CD4-positive, alpha-beta T cell (primary cell): ENCODE measurements at regions of chr22 and their contacts with region 1.

Region 1: GRCh38 chr22:46006379-46007002 is 29.5 kb upstream of the WNT7B start:
- DNase-seq: peak; percentile 79 to 94 (median 89)
- ATAC-seq: peak; percentile 94
- H3K4me3 ChIP-seq: no peak overlapping the region
- H3K4me3 Mint-ChIP-seq: no peak overlapping the region
- H3K27ac ChIP-seq: no peak overlapping the region
- H3K27ac Mint-ChIP-seq: no peak overlapping the region
- H3K4me1 ChIP-seq: peaks cover 16% of the 10 kb centered on the region
- H3K4me1 Mint-ChIP-seq: peaks cover 4% of the 10 kb centered on the region
- H3K27me3 ChIP-seq: peaks cover 0 to 4% of the 10 kb centered on the region in 2 experiments
- H3K27me3 Mint-ChIP-seq: peaks cover 4% of the 10 kb centered on the region
- CTCF ChIP-seq: peak; percentile 95

Region 2: GRCh38 chr22:46057762-46058420 is 51.4 kb after region 1 on chr22:
- CTCF ChIA-PET with region 1: interaction called, 12 read pairs
- POLR2A ChIA-PET with region 1: interaction called, 3 read pairs
- intact Hi-C with region 1: no loop called
- DNase-seq: peak in 6 of 14 experiments; percentile 17 to 80 (median 54)
- ATAC-seq: peak; percentile 69
- H3K4me3 ChIP-seq: no peak overlapping the region
- H3K4me3 Mint-ChIP-seq: peak overlapping the region; percentile 82
- H3K27ac ChIP-seq: peak overlapping the region in 1 of 2 donors; percentile 24
- H3K27ac Mint-ChIP-seq: peak overlapping the region; percentile 92
- H3K4me1 ChIP-seq: peaks cover 52% of the 10 kb centered on the region
- H3K4me1 Mint-ChIP-seq: peaks cover 42% of the 10 kb centered on the region
- H3K27me3 ChIP-seq: no peaks in the 10 kb centered on the region
- H3K27me3 Mint-ChIP-seq: no peaks in the 10 kb centered on the region
- CTCF ChIP-seq: no peak

Region 3: DNA sequence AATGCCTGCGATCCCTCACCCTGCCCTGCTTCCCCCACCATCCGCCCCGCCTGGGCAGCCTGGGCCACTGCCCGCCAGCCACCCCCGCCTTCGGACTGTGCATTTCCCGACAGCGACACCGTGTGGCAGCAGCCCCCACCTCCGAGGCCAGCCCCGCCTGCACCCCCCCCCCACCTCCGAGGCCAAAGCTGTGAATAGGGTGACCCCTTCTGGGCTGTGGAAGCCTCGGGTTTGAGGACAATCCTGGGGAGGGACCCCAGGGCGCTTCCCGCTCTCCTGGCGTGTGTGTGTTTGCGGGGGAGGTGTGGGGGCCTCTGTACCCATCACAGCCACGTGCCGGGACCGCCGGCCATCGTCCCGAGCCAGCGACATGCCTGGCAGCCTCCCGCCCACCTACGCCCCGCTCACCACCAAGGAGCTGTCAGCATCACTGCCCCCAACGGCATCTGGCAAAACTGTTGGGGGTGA is 110.0 kb after region 1 on chr22:
- CTCF ChIA-PET with region 1: interaction called, 78 read pairs
- POLR2A ChIA-PET with region 1: interaction called, 8 read pairs
- intact Hi-C with region 1: loop called (anchors 1 kb)
- DNase-seq: peak; percentile 76 to 92 (median 85)
- ATAC-seq: peak; percentile 97
- H3K4me3 ChIP-seq: no peak overlapping the region
- H3K4me3 Mint-ChIP-seq: no peak overlapping the region
- H3K27ac ChIP-seq: no peak overlapping the region
- H3K27ac Mint-ChIP-seq: no peak overlapping the region
- H3K4me1 ChIP-seq: peaks cover 11% of the 10 kb centered on the region
- H3K4me1 Mint-ChIP-seq: no peaks in the 10 kb centered on the region
- H3K27me3 ChIP-seq: no peaks in the 10 kb centered on the region
- H3K27me3 Mint-ChIP-seq: no peaks in the 10 kb centered on the region
- CTCF ChIP-seq: peak; percentile 80

Region 4: GRCh38 chr22:46296257-46297150 is 290.0 kb after region 1 on chr22 and contains the start of gene GTSE1:
- CTCF ChIA-PET with region 1: interaction called, 8 read pairs
- POLR2A ChIA-PET with region 1: no interaction called
- intact Hi-C with region 1: loop called in 1 of 2 experiments (anchors 5 kb)
- DNase-seq: peak; percentile 93 to 99 (median 97)
- ATAC-seq: peak; percentile 98
- H3K4me3 ChIP-seq: peak within 1 kb of the TSS; percentile 77
- H3K4me3 Mint-ChIP-seq: peak within 1 kb of the TSS; percentile 90
- H3K27ac ChIP-seq: peak within 1 kb of the TSS; percentile 75 to 91
- H3K27ac Mint-ChIP-seq: peak within 1 kb of the TSS; percentile 91
- H3K4me1 ChIP-seq: peaks cover 23% of the 10 kb centered on the region
- H3K4me1 Mint-ChIP-seq: peaks cover 26% of the 10 kb centered on the region
- H3K27me3 ChIP-seq: no peaks in the 10 kb centered on the region
- H3K27me3 Mint-ChIP-seq: peaks cover 4% of the 10 kb centered on the region
- CTCF ChIP-seq: peak; percentile 21
- total RNA-seq, gene GTSE1: 0.14 to 0.89 TPM

Region 5: DNA sequence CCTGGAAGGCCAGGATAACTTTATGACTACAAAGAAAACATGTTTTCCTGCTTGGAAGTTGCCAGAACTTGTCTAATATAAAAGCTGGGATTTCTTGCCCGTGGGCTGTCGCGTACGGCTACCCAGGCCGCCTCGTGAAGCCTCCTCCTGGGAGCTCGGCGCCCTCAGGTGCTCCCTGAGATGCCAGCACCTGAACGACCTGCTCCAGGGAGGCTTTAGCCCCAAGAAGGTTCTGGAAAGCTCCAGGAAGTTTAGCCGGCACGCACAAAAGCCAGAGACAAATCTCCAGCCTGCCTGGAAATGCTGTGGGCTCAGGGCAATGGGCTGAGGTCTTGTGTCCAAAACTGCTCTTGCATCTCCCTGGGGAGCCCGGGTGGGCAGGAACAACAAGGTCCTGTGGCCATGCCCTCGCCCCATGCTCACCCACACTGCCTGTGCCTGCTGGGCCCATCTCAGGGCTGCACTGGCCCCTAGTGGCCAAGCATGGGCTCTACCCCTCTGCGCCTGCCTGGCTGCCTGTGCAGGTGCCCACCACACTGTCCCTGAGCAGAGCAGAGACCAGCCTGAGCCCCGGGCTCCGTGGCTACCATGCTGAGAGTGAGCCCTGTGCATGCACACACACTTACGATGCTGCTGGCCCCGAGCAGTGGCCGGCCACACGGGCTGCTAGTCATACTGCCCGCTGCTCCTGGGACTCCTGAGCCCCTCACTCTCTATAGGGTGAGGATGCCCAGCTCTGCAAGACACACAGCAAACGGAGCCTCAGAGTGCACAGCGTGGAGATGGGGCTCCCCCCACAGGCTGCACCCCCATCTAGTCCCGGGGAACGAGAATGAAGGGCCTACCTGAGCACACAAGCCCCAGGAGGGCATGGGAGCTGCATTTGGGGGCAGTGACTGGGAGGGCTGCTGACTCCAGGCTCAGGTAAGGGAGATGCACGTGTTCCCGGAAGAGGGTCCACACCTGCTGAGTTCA is 535.8 kb after region 1 on chr22:
- CTCF ChIA-PET with region 1: no interaction called
- POLR2A ChIA-PET with region 1: no interaction called
- intact Hi-C with region 1: loop called in 1 of 2 experiments (anchors 10 kb)
- DNase-seq: peak; percentile 39 to 82 (median 66)
- ATAC-seq: peak; percentile 99
- H3K4me3 ChIP-seq: no peak overlapping the region
- H3K4me3 Mint-ChIP-seq: no peak overlapping the region
- H3K27ac ChIP-seq: no peak overlapping the region
- H3K27ac Mint-ChIP-seq: no peak overlapping the region
- H3K4me1 ChIP-seq: peaks cover 7% of the 10 kb centered on the region
- H3K4me1 Mint-ChIP-seq: no peaks in the 10 kb centered on the region
- H3K27me3 ChIP-seq: peaks cover 31 to 32% of the 10 kb centered on the region in 2 experiments
- H3K27me3 Mint-ChIP-seq: peaks cover 40% of the 10 kb centered on the region
- CTCF ChIP-seq: peak; percentile 81